Transverse colon (tissue), 4 donors: ENCODE measurements at regions of chr5 and their contacts with region 1.

Region 1: DNA sequence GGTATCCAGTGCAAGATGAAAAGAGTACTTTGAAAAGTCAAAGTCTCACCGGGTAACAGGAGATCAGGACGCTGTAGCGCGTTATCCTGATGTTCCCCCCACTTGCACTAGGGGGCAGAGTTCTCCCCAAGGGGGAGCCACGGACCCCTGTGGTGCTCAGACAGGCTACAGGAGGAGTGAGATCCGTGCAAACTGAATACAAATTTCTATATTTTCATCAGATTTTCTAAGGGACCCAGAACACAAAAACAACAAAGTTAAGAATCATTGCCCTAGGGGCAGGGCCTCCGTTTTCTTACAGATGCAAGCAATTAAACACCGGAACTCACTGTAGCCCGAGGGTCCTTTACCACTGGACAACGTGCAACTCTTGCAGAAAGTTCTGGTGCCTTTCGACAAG is 2.0 kb downstream of the MYO10 start:
- DNase-seq: peak; percentile 79
- H3K4me3 ChIP-seq: peak overlapping the region in 3 of 4 donors; percentile 77 to 88 (median 78)
- H3K27ac ChIP-seq: peak overlapping the region in 3 of 4 donors; percentile 89 to 92 (median 91)
- H3K4me1 ChIP-seq: peaks cover 0 to 49% (median 36%) of the 10 kb centered on the region in 4 donors
- H3K27me3 ChIP-seq: peaks cover 53% of the 10 kb centered on the region
- CTCF ChIP-seq: peak; percentile 74 to 87 (median 82)
- EP300 ChIP-seq: no peak
- POLR2A ChIP-seq: no peak

Region 2: GRCh38 chr5:16897224-16897704 is 36.9 kb before region 1 on chr5:
- in situ Hi-C with region 1: no loop called
- intact Hi-C with region 1: no loop called
- DNase-seq: no peak
- H3K4me3 ChIP-seq: no peak overlapping the region
- H3K27ac ChIP-seq: peak overlapping the region; percentile 21 to 92 (median 84)
- H3K4me1 ChIP-seq: peaks cover 12 to 53% (median 29%) of the 10 kb centered on the region in 4 donors
- H3K27me3 ChIP-seq: no peaks in the 10 kb centered on the region
- CTCF ChIP-seq: no peak
- EP300 ChIP-seq: no peak
- POLR2A ChIP-seq: no peak

Region 3: GRCh38 chr5:17157916-17158529 is 223.9 kb after region 1 on chr5:
- in situ Hi-C with region 1: loop called in 1 of 4 experiments (anchors 25 kb)
- intact Hi-C with region 1: no loop called
- DNase-seq: peak; percentile 41
- H3K4me3 ChIP-seq: no peak overlapping the region
- H3K27ac ChIP-seq: peak overlapping the region in 1 of 4 donors; percentile 3
- H3K4me1 ChIP-seq: peaks cover 0 to 28% (median 9%) of the 10 kb centered on the region in 4 donors
- H3K27me3 ChIP-seq: no peaks in the 10 kb centered on the region
- CTCF ChIP-seq: no peak
- EP300 ChIP-seq: no peak
- POLR2A ChIP-seq: no peak